ENCODE measurements at regions of chr4 and their contacts with region 1.

Region 1: GRCh38 chr4:106065018-106065417 is 169.7 kb downstream of the NPNT start:
- DNase-seq: no peak
- H3K4me3 ChIP-seq: no peak overlapping the region
- H3K27ac ChIP-seq: no peak overlapping the region
- H3K4me1 ChIP-seq: peaks cover 0 to 11% (median 0%) of the 10 kb centered on the region in 4 donors
- H3K27me3 ChIP-seq: no peaks in the 10 kb centered on the region
- CTCF ChIP-seq: peak in 1 of 2 experiments; percentile 10

Region 2: GRCh38 chr4:105002278-105002677 is 1062.7 kb before region 1 on chr4:
- intact Hi-C with region 1: no loop called
- DNase-seq: no peak
- H3K4me3 ChIP-seq: no peak overlapping the region
- H3K27ac ChIP-seq: no peak overlapping the region
- H3K4me1 ChIP-seq: no peaks in the 10 kb centered on the region
- H3K27me3 ChIP-seq: no peaks in the 10 kb centered on the region
- CTCF ChIP-seq: no peak

Region 3: DNA sequence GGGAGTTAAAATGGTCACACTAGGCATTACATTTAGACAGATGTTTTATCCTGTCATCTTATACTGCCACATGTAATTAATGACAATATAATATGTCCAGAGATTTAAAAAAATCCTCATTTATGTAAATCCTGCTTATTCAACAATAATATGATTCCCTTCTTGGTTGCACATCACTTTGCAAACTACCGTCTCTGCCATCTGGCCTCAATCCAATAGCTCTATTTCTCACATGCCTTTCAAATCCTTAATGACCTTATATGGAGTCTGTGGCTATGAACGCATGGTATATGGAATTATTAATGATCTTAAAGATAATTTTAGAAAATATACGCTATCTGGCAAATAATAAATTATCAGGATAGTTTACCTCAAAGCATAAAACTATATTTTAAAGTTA is 25.2 kb before region 1 on chr4:
- intact Hi-C with region 1: loop called (anchors 2 kb)
- DNase-seq: no peak
- H3K4me3 ChIP-seq: no peak overlapping the region
- H3K27ac ChIP-seq: no peak overlapping the region
- H3K4me1 ChIP-seq: peaks cover 0 to 57% (median 10%) of the 10 kb centered on the region in 4 donors
- H3K27me3 ChIP-seq: no peaks in the 10 kb centered on the region
- CTCF ChIP-seq: no peak

Region 4: DNA sequence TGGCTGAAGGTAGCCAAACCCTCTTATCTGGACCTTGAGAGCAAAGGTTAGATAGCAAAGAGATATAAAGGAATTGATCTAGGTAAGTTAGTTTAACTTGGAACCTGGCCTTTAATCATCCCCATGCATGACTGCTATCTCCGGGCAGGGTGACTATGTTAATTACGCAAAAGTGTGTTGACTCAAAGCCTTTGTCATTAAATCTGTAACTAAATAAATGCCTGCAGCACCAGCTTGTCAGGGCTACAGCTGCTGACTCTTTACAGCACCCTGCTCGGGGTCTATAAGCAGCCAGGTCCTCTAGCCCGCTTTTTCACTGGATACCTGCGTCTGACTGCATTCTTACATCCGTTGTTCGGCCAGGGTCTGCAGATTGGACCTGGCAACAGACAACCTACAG is 49.3 kb after region 1 on chr4:
- intact Hi-C with region 1: no loop called
- DNase-seq: no peak
- H3K4me3 ChIP-seq: no peak overlapping the region
- H3K27ac ChIP-seq: no peak overlapping the region
- H3K4me1 ChIP-seq: no peaks in the 10 kb centered on the region
- H3K27me3 ChIP-seq: no peaks in the 10 kb centered on the region
- CTCF ChIP-seq: no peak

Measured in tibial artery (tissue), 4 donors.